ENCODE measurements at regions of chr1 and their contacts with region 1.

Region 1: GRCh38 chr1:53278201-53278725 is 39.9 kb upstream of the MAGOH start:
- DNase-seq: peak; percentile 31 to 74 (median 62)
- ATAC-seq: peak; percentile 76
- H3K4me3 ChIP-seq: no peak overlapping the region
- H3K4me3 Mint-ChIP-seq: no peak overlapping the region
- H3K27ac ChIP-seq: no peak overlapping the region
- H3K27ac Mint-ChIP-seq: peak overlapping the region in 1 of 9 donors; percentile 71
- H3K4me1 ChIP-seq: no peaks in the 10 kb centered on the region
- H3K4me1 Mint-ChIP-seq: peaks cover 0 to 2% (median 0%) of the 10 kb centered on the region in 7 donors
- H3K27me3 ChIP-seq: no peaks in the 10 kb centered on the region
- H3K27me3 Mint-ChIP-seq: no peaks in the 10 kb centered on the region

Region 2: GRCh38 chr1:53393325-53393792 is 115.1 kb after region 1 on chr1:
- CTCF ChIA-PET with region 1: interaction called, 88 read pairs
- POLR2A ChIA-PET with region 1: no interaction called
- intact Hi-C with region 1: loop called (anchors 1 kb)
- DNase-seq: peak; percentile 28 to 80 (median 62)
- ATAC-seq: peak; percentile 81
- H3K4me3 ChIP-seq: no peak overlapping the region
- H3K4me3 Mint-ChIP-seq: no peak overlapping the region
- H3K27ac ChIP-seq: no peak overlapping the region
- H3K27ac Mint-ChIP-seq: peak overlapping the region in 1 of 9 donors; percentile 45
- H3K4me1 ChIP-seq: no peaks in the 10 kb centered on the region
- H3K4me1 Mint-ChIP-seq: peaks cover 0 to 10% (median 0%) of the 10 kb centered on the region in 7 donors
- H3K27me3 ChIP-seq: no peaks in the 10 kb centered on the region
- H3K27me3 Mint-ChIP-seq: peaks cover 0 to 10% (median 0%) of the 10 kb centered on the region in 5 donors

Region 3: GRCh38 chr1:53473463-53473862 is 195.2 kb after region 1 on chr1:
- CTCF ChIA-PET with region 1: no interaction called
- POLR2A ChIA-PET with region 1: no interaction called
- intact Hi-C with region 1: loop called (anchors 1 to 2 kb)
- DNase-seq: no peak
- ATAC-seq: no peak
- H3K4me3 ChIP-seq: no peak overlapping the region
- H3K4me3 Mint-ChIP-seq: no peak overlapping the region
- H3K27ac ChIP-seq: no peak overlapping the region
- H3K27ac Mint-ChIP-seq: no peak overlapping the region
- H3K4me1 ChIP-seq: no peaks in the 10 kb centered on the region
- H3K4me1 Mint-ChIP-seq: no peaks in the 10 kb centered on the region
- H3K27me3 ChIP-seq: no peaks in the 10 kb centered on the region
- H3K27me3 Mint-ChIP-seq: peaks cover 0 to 5% (median 0%) of the 10 kb centered on the region in 5 donors

Region 4: GRCh38 chr1:53681977-53682685 is 403.9 kb after region 1 on chr1:
- CTCF ChIA-PET with region 1: interaction called, 4 read pairs
- POLR2A ChIA-PET with region 1: no interaction called
- intact Hi-C with region 1: loop called in 1 of 2 experiments (anchors 2 kb)
- DNase-seq: peak in 7 of 9 donors; percentile 13 to 40 (median 29)
- ATAC-seq: peak; percentile 51
- H3K4me3 ChIP-seq: no peak overlapping the region
- H3K4me3 Mint-ChIP-seq: peak overlapping the region in 8 of 10 donors; percentile 49 to 74 (median 64)
- H3K27ac ChIP-seq: no peak overlapping the region
- H3K27ac Mint-ChIP-seq: peak overlapping the region in 1 of 9 donors; percentile 32
- H3K4me1 ChIP-seq: peaks cover 0 to 6% of the 10 kb centered on the region in 2 donors
- H3K4me1 Mint-ChIP-seq: peaks cover 4 to 12% (median 8%) of the 10 kb centered on the region in 7 donors
- H3K27me3 ChIP-seq: no peaks in the 10 kb centered on the region
- H3K27me3 Mint-ChIP-seq: peaks cover 7 to 28% (median 19%) of the 10 kb centered on the region in 5 donors

Region 5: DNA sequence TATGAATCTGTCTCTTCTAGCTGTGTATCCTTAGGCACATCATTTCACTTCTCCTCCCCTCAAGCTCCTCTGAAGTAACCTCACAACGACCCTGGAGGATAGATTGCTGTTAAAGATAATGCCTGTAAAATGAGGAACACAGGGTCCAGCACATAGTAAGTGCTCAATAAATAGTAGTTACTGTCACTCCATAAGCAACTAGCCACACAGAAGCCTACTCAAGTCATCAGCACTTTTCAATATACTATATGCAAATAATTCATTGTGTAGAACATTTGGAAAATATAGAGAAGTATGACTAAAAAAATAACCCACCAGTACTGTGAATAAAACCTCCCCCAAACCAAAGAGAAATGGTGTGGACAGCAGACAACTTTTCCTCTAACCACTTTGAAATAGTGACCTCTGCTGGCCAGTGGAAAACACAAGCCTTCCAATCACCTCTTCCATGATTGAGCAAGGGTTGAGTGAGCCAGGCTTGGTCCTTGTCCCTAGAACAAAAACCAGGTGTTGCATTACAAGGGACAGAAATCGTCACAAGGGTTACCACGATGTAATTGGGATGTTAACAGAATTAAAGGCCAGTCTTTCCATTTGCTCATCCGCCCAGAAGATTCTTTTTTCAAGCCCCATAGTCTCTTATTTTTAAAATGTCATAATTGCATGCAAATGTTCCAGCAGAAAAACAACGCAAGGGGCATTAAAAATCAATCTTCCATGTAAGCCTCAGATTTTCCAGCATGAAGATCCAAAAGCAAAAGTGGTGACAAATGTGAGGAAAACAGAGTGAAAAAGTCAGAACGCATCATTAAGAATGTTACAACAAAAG is 476.4 kb after region 1 on chr1:
- CTCF ChIA-PET with region 1: no interaction called
- POLR2A ChIA-PET with region 1: no interaction called
- intact Hi-C with region 1: loop called in 1 of 2 experiments (anchors 1 kb)
- DNase-seq: peak in 2 of 9 donors; percentile 2 to 7
- ATAC-seq: no peak
- H3K4me3 ChIP-seq: no peak overlapping the region
- H3K4me3 Mint-ChIP-seq: no peak overlapping the region
- H3K27ac ChIP-seq: no peak overlapping the region
- H3K27ac Mint-ChIP-seq: no peak overlapping the region
- H3K4me1 ChIP-seq: no peaks in the 10 kb centered on the region
- H3K4me1 Mint-ChIP-seq: no peaks in the 10 kb centered on the region
- H3K27me3 ChIP-seq: no peaks in the 10 kb centered on the region
- H3K27me3 Mint-ChIP-seq: peaks cover 0 to 1% (median 0%) of the 10 kb centered on the region in 5 donors